Panc1 (cell line): ENCODE measurements at regions of chr16 and their contacts with region 1.

Region 1: GRCh38 chr16:3106205-3106928 is 6.0 kb upstream of the ZNF205 start:
- DNase-seq: no peak
- ATAC-seq: peak; percentile 97
- H3K4me3 ChIP-seq: peak overlapping the region; percentile 60 to 76
- H3K27ac ChIP-seq: peak overlapping the region; percentile 87
- H3K4me1 ChIP-seq: peaks cover 7% of the 10 kb centered on the region; the same call in 1 of the 2 replicates
- H3K27me3 ChIP-seq: no peaks in the 10 kb centered on the region
- CTCF ChIP-seq: no peak

Region 2: GRCh38 chr16:2350500-2350899 is 755.9 kb before region 1 on chr16:
- CTCF ChIA-PET with region 1: no interaction called
- POLR2A ChIA-PET with region 1: no interaction called
- in situ Hi-C with region 1: no loop called
- intact Hi-C with region 1: no loop called
- DNase-seq: no peak
- ATAC-seq: no peak
- H3K4me3 ChIP-seq: no peak overlapping the region
- H3K27ac ChIP-seq: no peak overlapping the region
- H3K4me1 ChIP-seq: no peaks in the 10 kb centered on the region
- H3K27me3 ChIP-seq: no peaks in the 10 kb centered on the region
- CTCF ChIP-seq: no peak

Region 3: DNA sequence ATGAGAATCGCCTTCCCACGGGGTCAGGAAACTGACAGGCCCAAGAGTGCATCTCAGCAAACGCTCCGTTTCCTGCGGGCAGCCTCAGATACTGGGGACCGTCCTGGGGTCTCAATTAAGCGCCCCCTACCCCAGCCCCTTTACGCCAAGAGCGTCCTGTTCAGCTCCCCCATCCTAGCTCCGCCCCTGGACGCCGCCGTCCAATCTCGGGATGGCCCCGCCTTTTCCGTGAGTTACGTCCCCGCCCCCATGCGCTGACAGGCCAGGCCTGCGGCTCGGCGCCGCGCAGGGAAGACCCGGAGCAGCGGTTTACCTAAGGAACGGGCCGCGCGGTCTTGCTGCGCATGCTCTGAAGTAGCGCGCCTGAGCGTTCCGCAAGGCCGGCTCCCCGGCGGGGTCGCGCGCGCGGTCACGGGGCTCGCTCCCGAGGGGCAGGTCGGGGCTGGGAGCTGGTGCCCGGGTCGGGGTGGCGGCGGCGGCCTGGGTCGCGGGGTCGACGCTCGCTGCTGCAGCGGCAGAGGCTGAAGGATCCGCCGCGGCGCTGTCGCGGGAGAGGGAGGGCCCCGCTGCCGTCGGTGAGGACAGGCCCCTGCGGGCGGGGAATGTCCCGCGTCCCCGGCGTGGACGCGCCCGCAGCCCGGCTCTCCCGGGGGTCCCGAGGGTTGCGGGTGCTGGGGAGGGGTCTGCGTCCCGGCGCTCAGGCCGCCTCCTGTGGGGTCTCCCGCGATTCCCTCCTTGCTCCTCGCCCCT is 194.6 kb before region 1 on chr16 and contains the start of gene FLYWCH1:
- CTCF ChIA-PET with region 1: no interaction called
- POLR2A ChIA-PET with region 1: no interaction called
- in situ Hi-C with region 1: no loop called
- intact Hi-C with region 1: no loop called
- DNase-seq: no peak
- ATAC-seq: peak; percentile 96
- H3K4me3 ChIP-seq: peak within 1 kb of the TSS; percentile 79 to 98
- H3K27ac ChIP-seq: peak within 1 kb of the TSS; percentile 91
- H3K4me1 ChIP-seq: peaks cover 12% of the 10 kb centered on the region
- H3K27me3 ChIP-seq: no peaks in the 10 kb centered on the region
- CTCF ChIP-seq: no peak
- total RNA-seq, gene FLYWCH1: 67.9 TPM

Region 4: GRCh38 chr16:2936436-2937011 is 169.8 kb before region 1 on chr16:
- CTCF ChIA-PET with region 1: no interaction called
- POLR2A ChIA-PET with region 1: no interaction called
- in situ Hi-C with region 1: no loop called
- intact Hi-C with region 1: no loop called
- DNase-seq: no peak
- ATAC-seq: no peak
- H3K4me3 ChIP-seq: no peak overlapping the region
- H3K27ac ChIP-seq: no peak overlapping the region
- H3K4me1 ChIP-seq: no peaks in the 10 kb centered on the region
- H3K27me3 ChIP-seq: no peaks in the 10 kb centered on the region
- CTCF ChIP-seq: no peak

Region 5: GRCh38 chr16:3045357-3045728 is 61.0 kb before region 1 on chr16:
- CTCF ChIA-PET with region 1: no interaction called
- POLR2A ChIA-PET with region 1: interaction called, 11 read pairs
- in situ Hi-C with region 1: no loop called
- intact Hi-C with region 1: no loop called
- DNase-seq: no peak
- ATAC-seq: peak; percentile 72
- H3K4me3 ChIP-seq: peak overlapping the region; percentile 51 to 59
- H3K27ac ChIP-seq: no peak overlapping the region
- H3K4me1 ChIP-seq: no peaks in the 10 kb centered on the region
- H3K27me3 ChIP-seq: no peaks in the 10 kb centered on the region
- CTCF ChIP-seq: no peak

Region 6: GRCh38 chr16:3187798-3188674 is 81.7 kb after region 1 on chr16 and contains the start of gene OR1F1:
- CTCF ChIA-PET with region 1: interaction called, 12 read pairs
- POLR2A ChIA-PET with region 1: no interaction called
- in situ Hi-C with region 1: no loop called
- intact Hi-C with region 1: no loop called
- DNase-seq: no peak
- ATAC-seq: peak; percentile 35
- H3K4me3 ChIP-seq: peak within 1 kb of the TSS; percentile 77 to 92
- H3K27ac ChIP-seq: peak within 1 kb of the TSS; percentile 80
- H3K4me1 ChIP-seq: peaks cover 8% of the 10 kb centered on the region
- H3K27me3 ChIP-seq: no peaks in the 10 kb centered on the region
- CTCF ChIP-seq: no peak
- total RNA-seq, gene OR1F1: 0.26 TPM